A673 (cell line): ENCODE measurements at regions of chr15 and their contacts with region 1.

Region 1: DNA sequence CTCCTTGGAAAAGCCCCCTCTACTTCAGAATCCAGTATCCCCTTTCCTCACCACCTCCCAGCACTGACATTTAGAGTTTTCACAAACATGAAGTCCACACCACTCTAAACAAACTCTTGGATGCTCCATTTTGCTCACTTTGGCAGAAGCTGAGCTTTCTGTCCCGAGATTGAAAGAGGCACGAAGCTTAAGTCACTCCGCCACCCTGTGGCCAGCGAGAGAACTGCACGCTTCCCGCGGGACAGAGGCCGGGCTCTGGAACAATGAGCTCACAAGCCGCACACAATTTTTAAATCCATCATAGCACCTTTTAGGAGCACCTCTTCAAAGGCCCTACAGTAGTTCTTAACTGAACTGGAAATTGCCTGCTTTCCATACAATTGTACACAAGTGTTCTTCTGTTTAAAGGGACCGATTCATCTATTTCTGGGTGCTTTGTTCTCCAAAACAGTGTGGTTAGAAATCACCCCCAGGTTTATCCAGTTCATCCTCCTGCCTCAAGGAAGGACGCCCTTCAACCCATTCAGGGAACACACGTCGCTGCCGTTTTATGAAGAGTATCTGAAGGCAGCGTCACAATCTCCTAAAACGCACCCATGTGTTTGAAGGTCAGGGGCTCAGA is 226.1 kb downstream of the VPS13C start:
- DNase-seq: peak; percentile 83
- H3K4me3 ChIP-seq: no peak overlapping the region
- H3K27ac ChIP-seq: no peak overlapping the region
- H3K4me1 ChIP-seq: no peaks in the 10 kb centered on the region
- H3K27me3 ChIP-seq: no peaks in the 10 kb centered on the region
- CTCF ChIP-seq: peak; percentile 98

Region 2: DNA sequence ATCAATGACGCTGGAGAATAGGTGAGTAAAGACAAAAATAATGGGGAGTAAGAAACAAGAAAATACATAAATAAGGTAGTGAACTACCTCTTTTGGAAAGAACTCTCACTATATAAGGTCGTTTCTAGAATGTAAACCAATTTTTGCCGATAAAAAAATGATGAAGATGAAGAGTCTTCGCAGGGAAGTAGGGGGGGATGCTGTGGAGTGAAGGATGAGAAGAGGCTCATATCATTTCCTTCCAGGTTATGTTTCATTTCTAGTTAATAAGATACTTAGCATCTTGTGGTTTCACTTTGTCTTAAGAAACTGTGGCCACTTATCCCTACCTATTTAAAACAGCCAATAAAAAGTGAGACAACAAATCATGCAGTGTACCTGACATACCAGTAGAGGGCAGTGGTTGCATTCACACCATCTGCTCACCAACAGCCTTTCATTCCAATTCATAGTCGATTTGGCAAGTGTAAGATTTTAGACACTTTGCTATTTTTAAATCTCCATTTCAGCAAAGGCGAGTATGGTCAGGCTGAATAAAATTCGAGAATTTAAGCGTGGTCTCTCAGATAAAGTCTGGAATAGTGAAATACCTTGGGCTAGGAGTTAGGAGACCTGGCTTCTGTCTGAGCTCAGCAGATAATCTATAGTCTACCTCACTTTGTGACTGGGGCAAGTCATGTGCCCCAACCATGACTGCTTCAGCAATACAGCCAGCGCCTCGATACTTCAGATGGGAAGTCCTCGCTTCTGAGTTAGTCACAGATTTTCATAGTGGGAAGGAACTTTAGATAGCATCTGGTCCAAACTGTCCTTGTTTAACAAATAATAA is 1326.4 kb before region 1 on chr15:
- CTCF ChIA-PET with region 1: no interaction called
- POLR2A ChIA-PET with region 1: no interaction called
- intact Hi-C with region 1: loop called (anchors 10 kb)
- DNase-seq: peak; percentile 66
- H3K4me3 ChIP-seq: no peak overlapping the region
- H3K27ac ChIP-seq: no peak overlapping the region
- H3K4me1 ChIP-seq: no peaks in the 10 kb centered on the region
- H3K27me3 ChIP-seq: no peaks in the 10 kb centered on the region
- CTCF ChIP-seq: peak; percentile 94

Region 3: GRCh38 chr15:60585743-60586708 is 1248.2 kb before region 1 on chr15:
- CTCF ChIA-PET with region 1: interaction called, 8 read pairs
- POLR2A ChIA-PET with region 1: no interaction called
- intact Hi-C with region 1: loop called (anchors 2 kb)
- DNase-seq: peak; percentile 74
- H3K4me3 ChIP-seq: no peak overlapping the region
- H3K27ac ChIP-seq: no peak overlapping the region
- H3K4me1 ChIP-seq: peaks cover 2% of the 10 kb centered on the region
- H3K27me3 ChIP-seq: peaks cover 43% of the 10 kb centered on the region
- CTCF ChIP-seq: peak; percentile 93

Region 4: DNA sequence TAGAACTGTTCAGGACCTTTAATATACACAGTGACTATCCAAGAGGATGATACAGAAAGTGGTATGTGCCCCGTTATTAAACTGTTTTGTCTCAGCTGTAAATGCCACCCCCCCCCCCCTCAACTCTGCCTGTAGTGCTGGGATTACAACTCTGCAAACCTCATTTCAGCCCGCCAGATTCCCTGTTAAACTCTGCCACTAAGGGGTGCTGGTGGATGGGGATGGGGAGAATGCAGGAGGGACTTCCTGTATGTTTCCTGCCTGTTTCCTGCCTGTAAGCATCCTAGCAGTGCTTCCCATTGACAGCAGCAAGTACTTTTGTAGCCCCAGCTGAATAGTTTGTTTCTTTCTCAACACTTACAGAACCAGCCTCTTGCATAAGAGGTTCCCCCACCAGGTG is 303.4 kb before region 1 on chr15:
- CTCF ChIA-PET with region 1: interaction called, 17 read pairs
- POLR2A ChIA-PET with region 1: no interaction called
- intact Hi-C with region 1: loop called (anchors 1 kb)
- DNase-seq: peak; percentile 67
- H3K4me3 ChIP-seq: no peak overlapping the region
- H3K27ac ChIP-seq: no peak overlapping the region
- H3K4me1 ChIP-seq: no peaks in the 10 kb centered on the region
- H3K27me3 ChIP-seq: no peaks in the 10 kb centered on the region
- CTCF ChIP-seq: peak; percentile 48